CD4-positive, alpha-beta memory T cell (primary cell): ENCODE measurements at regions of chr1 and their contacts with region 1.

Region 1: GRCh38 chr1:229258031-229258756 is 12.7 kb upstream of the RAB4A start:
- DNase-seq: peak; percentile 63 to 73 (median 69)
- H3K4me3 ChIP-seq: no peak overlapping the region
- H3K4me3 Mint-ChIP-seq: peak overlapping the region in 7 of 8 donors; percentile 12 to 82 (median 72)
- H3K27ac ChIP-seq: no peak overlapping the region
- H3K27ac Mint-ChIP-seq: peak overlapping the region; percentile 17 to 93 (median 79)
- H3K4me1 ChIP-seq: peaks cover 40% of the 10 kb centered on the region
- H3K4me1 Mint-ChIP-seq: peaks cover 25 to 34% (median 28%) of the 10 kb centered on the region in 4 donors
- H3K27me3 ChIP-seq: no peaks in the 10 kb centered on the region
- H3K27me3 Mint-ChIP-seq: no peaks in the 10 kb centered on the region

Region 2: GRCh38 chr1:228664399-228664914 is 593.7 kb before region 1 on chr1:
- CTCF ChIA-PET with region 1: interaction called, 148 read pairs
- POLR2A ChIA-PET with region 1: no interaction called
- intact Hi-C with region 1: loop called (anchors 1 kb)
- DNase-seq: peak; percentile 66 to 74 (median 73)
- H3K4me3 ChIP-seq: no peak overlapping the region
- H3K4me3 Mint-ChIP-seq: no peak overlapping the region
- H3K27ac ChIP-seq: no peak overlapping the region
- H3K27ac Mint-ChIP-seq: no peak overlapping the region
- H3K4me1 ChIP-seq: no peaks in the 10 kb centered on the region
- H3K4me1 Mint-ChIP-seq: no peaks in the 10 kb centered on the region
- H3K27me3 ChIP-seq: no peaks in the 10 kb centered on the region
- H3K27me3 Mint-ChIP-seq: peaks cover 5 to 7% of the 10 kb centered on the region in 2 donors

Region 3: DNA sequence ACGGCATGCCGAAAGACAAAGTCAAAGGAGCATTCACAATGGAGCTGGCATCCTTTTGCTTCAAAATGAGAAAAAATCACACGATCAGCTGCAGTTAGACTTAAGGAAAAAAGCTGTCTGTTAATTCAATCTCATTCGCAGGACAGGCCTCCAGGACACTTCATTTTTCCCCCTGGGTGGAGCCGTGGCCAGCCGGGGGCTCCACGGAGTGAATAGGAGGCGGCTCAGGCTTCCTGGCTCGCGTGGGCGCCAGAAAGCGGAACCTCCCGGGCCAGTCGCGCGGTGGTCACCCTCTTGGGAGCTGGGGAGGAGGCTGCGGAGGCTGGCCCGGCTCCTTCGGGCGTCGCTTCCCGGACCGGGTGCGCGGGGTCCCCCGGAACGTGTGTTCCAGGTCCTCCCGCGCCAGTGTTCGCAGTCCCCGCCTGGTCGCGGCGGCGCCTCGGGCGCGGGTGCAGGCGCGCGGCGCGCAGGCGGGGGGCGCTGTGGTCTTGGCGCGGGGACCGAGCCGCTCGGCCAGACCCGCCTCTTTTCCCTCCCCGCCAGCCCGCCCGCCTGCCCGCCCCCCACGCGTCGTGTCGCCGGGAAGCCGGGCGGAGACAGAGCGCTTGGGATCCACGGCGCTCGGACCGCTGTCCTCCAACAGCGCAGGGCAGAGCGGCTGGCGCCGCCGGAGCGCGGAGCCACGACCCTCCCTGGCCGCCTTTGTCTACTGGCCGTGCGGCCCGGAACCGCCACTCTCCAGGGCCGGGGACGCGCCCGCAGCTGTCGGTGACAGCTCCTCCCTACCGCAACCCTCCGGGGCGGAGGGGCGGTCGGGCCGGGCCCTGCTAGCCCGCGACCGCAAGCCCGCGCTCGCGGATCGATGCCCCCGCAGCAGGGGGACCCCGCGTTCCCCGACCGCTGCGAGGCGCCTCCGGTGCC is 523.1 kb before region 1 on chr1 and contains the start of gene RHOU:
- CTCF ChIA-PET with region 1: interaction called, 49 read pairs
- POLR2A ChIA-PET with region 1: interaction called, 10 read pairs
- intact Hi-C with region 1: loop called (anchors 1 kb)
- DNase-seq: peak; percentile 58 to 80 (median 72)
- H3K4me3 ChIP-seq: peak within 1 kb of the TSS; percentile 37 to 67
- H3K4me3 Mint-ChIP-seq: peak within 1 kb of the TSS; percentile 89 to 96 (median 92)
- H3K27ac ChIP-seq: peak within 1 kb of the TSS; percentile 37
- H3K27ac Mint-ChIP-seq: peak within 1 kb of the TSS; percentile 8 to 88 (median 81)
- H3K4me1 ChIP-seq: peaks cover 32% of the 10 kb centered on the region
- H3K4me1 Mint-ChIP-seq: peaks cover 18 to 38% (median 29%) of the 10 kb centered on the region in 4 donors
- H3K27me3 ChIP-seq: no peaks in the 10 kb centered on the region
- H3K27me3 Mint-ChIP-seq: peaks cover 0 to 2% of the 10 kb centered on the region in 2 donors
- total RNA-seq, gene RHOU: 3.4 to 4.1 TPM

Region 4: GRCh38 chr1:229244091-229244490 is 14.1 kb before region 1 on chr1:
- CTCF ChIA-PET with region 1: interaction called, 10 read pairs
- POLR2A ChIA-PET with region 1: no interaction called
- intact Hi-C with region 1: no loop called
- DNase-seq: no peak
- H3K4me3 ChIP-seq: no peak overlapping the region
- H3K4me3 Mint-ChIP-seq: no peak overlapping the region
- H3K27ac ChIP-seq: no peak overlapping the region
- H3K27ac Mint-ChIP-seq: no peak overlapping the region
- H3K4me1 ChIP-seq: peaks cover 9% of the 10 kb centered on the region
- H3K4me1 Mint-ChIP-seq: peaks cover 5 to 12% (median 6%) of the 10 kb centered on the region in 4 donors
- H3K27me3 ChIP-seq: no peaks in the 10 kb centered on the region
- H3K27me3 Mint-ChIP-seq: no peaks in the 10 kb centered on the region

Region 5: DNA sequence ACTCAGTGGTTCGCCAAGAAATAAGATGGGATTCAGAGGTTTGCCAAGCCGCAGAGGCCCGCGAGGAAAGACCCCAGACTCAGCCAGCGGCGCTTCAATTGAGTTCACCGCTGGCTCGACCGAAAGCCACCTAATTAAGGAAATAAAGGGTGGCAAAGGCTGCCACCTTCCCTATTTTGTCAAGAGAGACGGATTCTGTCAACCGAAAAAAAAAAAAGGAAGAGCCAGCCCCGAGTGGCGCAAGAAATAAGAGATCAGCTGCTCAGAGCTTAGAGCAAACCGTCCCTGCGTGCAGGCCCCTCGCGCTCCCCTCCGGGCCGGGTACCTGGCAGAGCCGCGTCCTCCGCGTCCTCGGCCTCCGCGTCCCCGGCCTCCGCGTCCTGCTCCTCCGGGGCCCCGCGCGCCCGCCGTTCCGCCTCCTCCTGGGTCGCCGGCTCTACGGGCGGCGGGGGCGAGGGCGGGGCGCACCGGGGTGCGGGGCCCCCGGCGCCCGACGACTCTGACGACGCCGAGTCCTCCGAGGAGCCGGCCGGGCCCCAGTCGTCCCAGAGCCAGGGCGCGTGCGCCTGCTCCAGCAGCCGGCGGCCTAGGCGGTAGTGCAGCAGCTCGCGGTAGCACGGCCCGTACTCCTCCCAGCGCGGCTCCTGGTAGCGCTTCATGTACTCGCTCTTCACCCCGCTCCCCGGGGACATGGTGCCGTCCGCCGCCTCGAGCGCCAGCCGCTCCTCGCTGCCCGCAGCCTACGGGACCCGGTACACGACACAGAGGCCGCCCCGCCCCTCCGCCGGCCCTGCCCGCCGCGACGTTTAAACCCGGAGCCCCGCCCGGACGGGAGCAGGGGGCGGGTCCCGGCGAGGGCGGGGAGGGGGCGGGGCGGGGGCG is 83.8 kb after region 1 on chr1:
- CTCF ChIA-PET with region 1: interaction called, 4 read pairs
- POLR2A ChIA-PET with region 1: no interaction called
- intact Hi-C with region 1: loop called (anchors 1 kb)
- DNase-seq: peak in 4 of 5 donors; percentile 85 to 89 (median 86)
- H3K4me3 ChIP-seq: peak overlapping the region; percentile 67 to 76
- H3K4me3 Mint-ChIP-seq: peak overlapping the region; percentile 87 to 95 (median 91)
- H3K27ac ChIP-seq: peak overlapping the region; percentile 68
- H3K27ac Mint-ChIP-seq: peak overlapping the region; percentile 81 to 94 (median 89)
- H3K4me1 ChIP-seq: peaks cover 55% of the 10 kb centered on the region
- H3K4me1 Mint-ChIP-seq: peaks cover 28 to 54% (median 43%) of the 10 kb centered on the region in 4 donors
- H3K27me3 ChIP-seq: no peaks in the 10 kb centered on the region
- H3K27me3 Mint-ChIP-seq: peaks cover 4 to 6% of the 10 kb centered on the region in 2 donors

Region 6: GRCh38 chr1:229479660-229480399 is 221.6 kb after region 1 on chr1:
- CTCF ChIA-PET with region 1: interaction called, 216 read pairs
- POLR2A ChIA-PET with region 1: interaction called, 5 read pairs
- intact Hi-C with region 1: loop called (anchors 1 kb)
- DNase-seq: no peak
- H3K4me3 ChIP-seq: no peak overlapping the region
- H3K4me3 Mint-ChIP-seq: no peak overlapping the region
- H3K27ac ChIP-seq: no peak overlapping the region
- H3K27ac Mint-ChIP-seq: peak overlapping the region in 3 of 7 donors; percentile 20 to 49 (median 48)
- H3K4me1 ChIP-seq: no peaks in the 10 kb centered on the region
- H3K4me1 Mint-ChIP-seq: peaks cover 5 to 13% (median 8%) of the 10 kb centered on the region in 4 donors
- H3K27me3 ChIP-seq: no peaks in the 10 kb centered on the region
- H3K27me3 Mint-ChIP-seq: no peaks in the 10 kb centered on the region

Region 7: GRCh38 chr1:229514578-229515275 is 256.5 kb after region 1 on chr1:
- CTCF ChIA-PET with region 1: interaction called, 98 read pairs
- POLR2A ChIA-PET with region 1: interaction called, 16 read pairs
- intact Hi-C with region 1: loop called (anchors 1 kb)
- DNase-seq: peak; percentile 67 to 72 (median 69)
- H3K4me3 ChIP-seq: no peak overlapping the region
- H3K4me3 Mint-ChIP-seq: no peak overlapping the region
- H3K27ac ChIP-seq: no peak overlapping the region
- H3K27ac Mint-ChIP-seq: peak overlapping the region in 5 of 7 donors; percentile 18 to 62 (median 36)
- H3K4me1 ChIP-seq: no peaks in the 10 kb centered on the region
- H3K4me1 Mint-ChIP-seq: peaks cover 2 to 8% (median 6%) of the 10 kb centered on the region in 4 donors
- H3K27me3 ChIP-seq: no peaks in the 10 kb centered on the region
- H3K27me3 Mint-ChIP-seq: no peaks in the 10 kb centered on the region